Motor neuron (in vitro differentiated cells): ENCODE measurements at regions of chr3 and their contacts with region 1.

Region 1: GRCh38 chr3:153768561-153769469 is 352.4 kb upstream of the ARHGEF26 start:
- ATAC-seq: peak in 7 of 8 experiments; percentile 21 to 96 (median 76)
- H3K4me3 ChIP-seq: no peak overlapping the region
- H3K27ac ChIP-seq: no peak overlapping the region
- H3K4me1 ChIP-seq: no peaks in the 10 kb centered on the region

Region 2: GRCh38 chr3:153001210-153002078 is 767.4 kb before region 1 on chr3:
- in situ Hi-C with region 1: loop called in 1 of 9 experiments (anchors 25 kb)
- ATAC-seq: peak in 4 of 8 experiments; percentile 21 to 86 (median 62)
- H3K4me3 ChIP-seq: no peak overlapping the region
- H3K27ac ChIP-seq: no peak overlapping the region
- H3K4me1 ChIP-seq: peaks cover 12 to 20% of the 10 kb centered on the region in 2 donors

Region 3: GRCh38 chr3:153161138-153161713 is 607.6 kb before region 1 on chr3:
- in situ Hi-C with region 1: loop called in 1 of 9 experiments (anchors 25 kb)
- ATAC-seq: peak; percentile 61 to 79 (median 70)
- H3K4me3 ChIP-seq: peak overlapping the region; percentile 59 to 89 (median 71)
- H3K27ac ChIP-seq: peak overlapping the region in 1 of 2 donors; percentile 54
- H3K4me1 ChIP-seq: peaks cover 5 to 21% of the 10 kb centered on the region in 2 donors

Region 4: DNA sequence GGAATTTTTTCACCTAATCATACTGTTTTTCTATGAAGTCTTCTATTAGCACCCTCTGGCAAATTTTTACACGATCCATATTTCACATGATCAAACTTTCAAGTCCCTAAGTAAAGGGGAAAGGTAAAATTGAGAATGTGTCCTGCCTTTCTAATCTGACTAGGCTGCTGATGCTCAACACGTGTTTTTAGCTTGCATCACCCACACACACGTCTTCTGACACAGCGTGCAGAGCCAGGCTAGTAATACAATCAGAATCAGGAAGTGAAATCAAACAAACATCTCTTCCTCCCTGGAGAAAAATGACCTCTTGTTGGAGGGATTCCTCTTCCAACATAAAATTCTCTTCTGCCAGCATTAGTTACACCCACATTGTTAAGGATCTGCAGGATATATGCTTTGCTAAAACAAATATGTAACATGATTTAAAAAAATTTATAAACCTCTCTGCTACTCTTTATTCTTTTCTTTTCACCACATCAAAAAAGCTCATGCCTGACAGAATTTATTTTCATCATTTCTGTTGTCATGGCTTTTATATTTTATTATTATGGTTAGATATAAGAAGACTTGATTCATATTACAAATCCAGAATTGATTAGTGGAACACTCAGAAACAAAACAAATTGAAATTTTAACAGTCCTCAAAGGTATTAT is 484.4 kb before region 1 on chr3:
- in situ Hi-C with region 1: loop called in 1 of 9 experiments (anchors 25 kb)
- ATAC-seq: peak; percentile 56 to 97 (median 90)
- H3K4me3 ChIP-seq: no peak overlapping the region
- H3K27ac ChIP-seq: peak overlapping the region in 1 of 2 donors; percentile 49
- H3K4me1 ChIP-seq: peaks cover 0 to 5% of the 10 kb centered on the region in 2 donors

Region 5: GRCh38 chr3:153357436-153357835 is 411.4 kb before region 1 on chr3:
- in situ Hi-C with region 1: no loop called
- ATAC-seq: peak in 1 of 8 experiments; percentile 70
- H3K4me3 ChIP-seq: no peak overlapping the region
- H3K27ac ChIP-seq: no peak overlapping the region
- H3K4me1 ChIP-seq: no peaks in the 10 kb centered on the region